K562 (cell line): ENCODE measurements at regions of chr12 and their contacts with region 1.

Region 1: DNA sequence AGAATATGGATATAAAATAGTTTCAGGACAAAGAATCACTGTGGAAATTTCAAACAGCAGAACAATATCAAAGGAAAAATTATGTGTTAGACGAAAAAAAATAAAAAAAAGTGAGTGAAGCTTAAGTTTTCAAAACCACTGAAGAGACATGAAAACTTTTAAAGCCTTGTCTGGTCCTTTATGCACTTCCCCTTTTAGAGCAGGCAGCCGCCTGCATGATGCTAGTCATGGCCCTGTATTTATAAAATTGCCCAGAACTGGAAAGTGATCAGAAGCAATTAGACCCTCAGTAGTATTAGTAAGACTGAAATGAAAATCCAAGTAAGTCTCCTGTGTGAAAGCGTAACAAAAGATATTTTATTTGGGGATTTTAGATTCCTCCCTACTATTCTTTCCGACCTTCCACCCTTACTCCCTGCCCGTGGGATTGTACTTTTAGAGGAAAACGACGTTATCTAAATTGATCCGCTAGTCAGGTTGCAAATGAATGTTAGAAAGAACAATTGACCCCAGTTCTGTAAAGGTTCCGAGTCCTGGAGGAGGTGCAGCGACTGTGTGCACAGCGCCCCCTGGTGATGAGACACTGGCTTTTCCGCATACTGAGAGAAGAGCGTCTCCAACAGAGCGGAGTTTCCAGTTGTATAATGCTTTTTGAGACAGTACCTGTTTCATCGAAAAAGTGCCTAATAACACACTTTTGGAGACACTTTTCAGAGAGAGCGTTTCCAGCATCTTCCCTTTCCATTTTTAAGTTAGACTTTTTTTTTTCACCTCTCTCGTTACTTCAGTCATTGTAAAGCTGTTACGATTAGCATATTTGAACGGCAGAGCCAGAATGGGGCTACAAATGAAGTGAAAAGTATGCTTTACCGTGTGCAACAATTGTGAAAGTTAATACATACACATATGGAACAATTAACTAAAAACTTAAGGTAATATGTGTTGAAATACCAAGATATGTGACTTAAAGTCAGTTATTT is 12.4 kb downstream of the MGST1 start:
- DNase-seq: peak; percentile 31 to 67 (median 51)
- ATAC-seq: peak; percentile 94
- H3K4me3 ChIP-seq: no peak overlapping the region
- H3K27ac ChIP-seq: no peak overlapping the region
- H3K4me1 ChIP-seq: no peaks in the 10 kb centered on the region
- H3K27me3 ChIP-seq: no peaks in the 10 kb centered on the region
- CTCF ChIP-seq: peak; percentile 64 to 65 (median 64)
- EP300 ChIP-seq: no peak
- POLR2A ChIP-seq: no peak
- RAD21 ChIP-seq: peak; percentile 59 to 74

Region 2: GRCh38 chr12:15979096-15980092 is 380.4 kb before region 1 on chr12:
- CTCF ChIA-PET with region 1: no interaction called
- POLR2A ChIA-PET with region 1: no interaction called
- in situ Hi-C with region 1: no loop called
- intact Hi-C with region 1: loop called (anchors 10 kb)
- DNase-seq: peak; percentile 22 to 34 (median 28)
- ATAC-seq: peak; percentile 90
- H3K4me3 ChIP-seq: no peak overlapping the region
- H3K27ac ChIP-seq: no peak overlapping the region
- H3K4me1 ChIP-seq: no peaks in the 10 kb centered on the region
- H3K27me3 ChIP-seq: no peaks in the 10 kb centered on the region
- CTCF ChIP-seq: peak; percentile 28 to 41 (median 30); a peak in 2 of 6 replicates
- EP300 ChIP-seq: no peak
- POLR2A ChIP-seq: no peak
- RAD21 ChIP-seq: peak in 1 of 2 experiments; percentile 12; a peak in 1 of 4 replicates

Region 3: GRCh38 chr12:16189849-16190248 is 170.0 kb before region 1 on chr12:
- CTCF ChIA-PET with region 1: no interaction called
- POLR2A ChIA-PET with region 1: no interaction called
- in situ Hi-C with region 1: no loop called
- intact Hi-C with region 1: loop called (anchors 10 kb)
- DNase-seq: peak in 1 of 4 experiments; percentile 10
- ATAC-seq: no peak
- H3K4me3 ChIP-seq: no peak overlapping the region
- H3K27ac ChIP-seq: no peak overlapping the region
- H3K4me1 ChIP-seq: no peaks in the 10 kb centered on the region
- H3K27me3 ChIP-seq: no peaks in the 10 kb centered on the region
- CTCF ChIP-seq: 0 out of 6 replicates have a peak, but pooled peaks of 1 of the 3 experiments have one; percentile 11
- EP300 ChIP-seq: no peak
- POLR2A ChIP-seq: no peak
- RAD21 ChIP-seq: peak; percentile 15 to 60; a peak in 2 of 4 replicates

Region 4: DNA sequence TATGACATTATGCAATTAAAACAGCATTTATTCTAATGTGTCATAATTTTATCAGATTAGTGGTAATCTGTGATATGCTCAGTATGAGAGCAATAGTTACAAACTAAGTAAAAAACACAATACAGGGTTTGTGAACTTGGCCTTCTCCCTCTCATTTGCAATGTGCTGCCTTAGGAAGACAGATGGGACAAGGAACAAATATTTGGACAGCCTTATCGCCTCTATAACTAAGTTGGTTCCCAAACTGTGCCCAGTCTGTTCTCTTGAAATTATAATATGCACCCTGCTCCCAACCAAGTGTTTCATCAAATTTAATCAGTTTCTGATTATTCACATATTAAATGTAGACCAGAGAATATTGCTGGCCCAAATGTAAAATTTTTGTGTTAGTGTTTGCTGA is 10.3 kb after region 1 on chr12:
- CTCF ChIA-PET with region 1: no interaction called
- POLR2A ChIA-PET with region 1: no interaction called
- in situ Hi-C with region 1: no loop called
- intact Hi-C with region 1: no loop called
- DNase-seq: no peak
- ATAC-seq: no peak
- H3K4me3 ChIP-seq: no peak overlapping the region
- H3K27ac ChIP-seq: no peak overlapping the region
- H3K4me1 ChIP-seq: no peaks in the 10 kb centered on the region
- H3K27me3 ChIP-seq: no peaks in the 10 kb centered on the region
- CTCF ChIP-seq: no peak
- EP300 ChIP-seq: no peak
- POLR2A ChIP-seq: no peak
- RAD21 ChIP-seq: no peak

Region 5: DNA sequence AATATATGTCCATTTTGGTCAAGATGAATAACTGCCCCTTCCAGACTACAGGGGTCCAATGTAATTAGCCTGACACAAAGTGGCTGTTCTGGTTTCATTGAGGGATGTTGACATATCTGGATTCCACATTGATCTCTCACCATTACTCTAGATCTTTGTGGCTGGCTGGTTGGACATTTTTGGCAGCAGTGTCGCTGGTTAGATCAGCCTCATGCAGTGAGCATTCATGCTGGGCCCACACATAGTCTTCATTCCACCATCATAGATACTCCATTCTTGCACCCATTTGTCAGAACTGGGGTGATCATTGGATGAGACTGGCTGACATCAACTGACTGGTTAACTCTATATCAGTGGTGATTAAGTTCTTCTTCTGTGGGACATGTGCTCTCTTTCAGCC is 62.0 kb after region 1 on chr12:
- CTCF ChIA-PET with region 1: no interaction called
- POLR2A ChIA-PET with region 1: no interaction called
- in situ Hi-C with region 1: no loop called
- intact Hi-C with region 1: no loop called
- DNase-seq: no peak
- ATAC-seq: no peak
- H3K4me3 ChIP-seq: no peak overlapping the region
- H3K27ac ChIP-seq: no peak overlapping the region
- H3K4me1 ChIP-seq: no peaks in the 10 kb centered on the region
- H3K27me3 ChIP-seq: no peaks in the 10 kb centered on the region
- CTCF ChIP-seq: no peak
- EP300 ChIP-seq: no peak
- POLR2A ChIP-seq: no peak
- RAD21 ChIP-seq: no peak